Activated CD4-positive, alpha-beta T cell treated with anti-CD3 and anti-CD28 coated beads, Interleukin-2, amount 10 ng/mL, durations not matched to agents 24 days and 14 days (primary cell): ENCODE measurements at regions of chr9 and their contacts with region 1.

Region 1: GRCh38 chr9:214648-215493 is at the start of gene DOCK8:
- DNase-seq: peak; percentile 90
- H3K4me3 Mint-ChIP-seq: peak within 1 kb of the TSS; percentile 80
- H3K27ac Mint-ChIP-seq: peak within 1 kb of the TSS; percentile 81
- H3K4me1 Mint-ChIP-seq: peaks cover 20% of the 10 kb centered on the region
- H3K27me3 Mint-ChIP-seq: peaks cover 3% of the 10 kb centered on the region
- total RNA-seq, gene DOCK8: 121 TPM in 2 replicates

Region 2: DNA sequence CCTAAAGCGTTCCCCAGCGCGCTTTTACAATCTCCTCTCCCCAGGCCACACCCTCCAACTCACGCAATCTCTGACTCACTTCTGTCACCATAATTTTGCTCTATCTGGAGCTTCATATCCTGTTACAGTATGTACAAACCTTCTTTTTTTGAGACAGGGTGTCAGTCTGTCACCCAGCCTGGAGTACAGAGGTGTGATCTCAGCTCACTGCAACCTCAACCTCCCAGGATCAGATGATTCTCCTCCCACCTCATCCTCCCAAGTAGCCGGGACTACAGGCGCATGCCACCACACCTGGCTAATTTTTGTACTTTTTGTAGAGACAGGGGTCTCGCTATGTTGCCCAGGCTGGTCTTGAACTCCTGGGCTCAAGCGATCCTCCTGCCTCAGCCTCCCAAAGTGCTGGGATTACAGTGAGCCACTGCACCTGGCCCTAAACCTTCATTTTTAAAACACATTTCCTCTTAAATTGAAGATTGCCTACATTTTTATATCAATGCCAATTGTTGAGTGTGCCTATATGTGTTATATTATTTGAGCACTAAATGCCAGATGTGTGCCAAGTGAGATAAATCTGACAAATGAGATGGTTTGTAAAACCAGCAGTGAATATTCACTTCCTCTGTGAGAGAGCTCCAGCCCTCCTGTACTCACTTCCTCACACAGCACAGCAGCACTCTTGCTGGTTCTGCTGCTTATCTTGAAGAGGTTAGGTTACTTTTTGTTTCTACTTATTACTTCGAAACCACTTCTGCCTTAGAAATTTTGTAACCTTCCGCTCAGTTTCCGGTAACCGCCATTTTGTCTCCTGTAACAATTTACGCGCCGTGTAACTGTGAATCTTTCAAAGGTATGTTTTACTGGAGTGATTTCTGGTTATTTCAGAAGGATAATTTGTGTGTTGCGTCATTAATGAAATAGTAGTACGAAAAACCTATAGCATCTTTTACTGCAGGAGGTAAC is 57.7 kb after region 1 on chr9:
- intact Hi-C with region 1: loop called (anchors 1 kb)
- DNase-seq: peak; percentile 93
- H3K4me3 Mint-ChIP-seq: peak overlapping the region; percentile 94
- H3K27ac Mint-ChIP-seq: peak overlapping the region; percentile 99
- H3K4me1 Mint-ChIP-seq: peaks cover 46% of the 10 kb centered on the region
- H3K27me3 Mint-ChIP-seq: no peaks in the 10 kb centered on the region

Region 3: GRCh38 chr9:278651-279050 is 63.8 kb after region 1 on chr9:
- intact Hi-C with region 1: loop called (anchors 1 kb)
- DNase-seq: peak; percentile 86
- H3K4me3 Mint-ChIP-seq: no peak overlapping the region
- H3K27ac Mint-ChIP-seq: no peak overlapping the region
- H3K4me1 Mint-ChIP-seq: peaks cover 30% of the 10 kb centered on the region
- H3K27me3 Mint-ChIP-seq: no peaks in the 10 kb centered on the region

Region 4: GRCh38 chr9:297104-297972 is 82.5 kb after region 1 on chr9:
- intact Hi-C with region 1: loop called (anchors 5 kb)
- DNase-seq: no peak
- H3K4me3 Mint-ChIP-seq: peak overlapping the region; percentile 26
- H3K27ac Mint-ChIP-seq: peak overlapping the region; percentile 49
- H3K4me1 Mint-ChIP-seq: peaks cover 40% of the 10 kb centered on the region
- H3K27me3 Mint-ChIP-seq: no peaks in the 10 kb centered on the region